Activated T-helper 1 cell treated with anti-CD3 and anti-CD28 coated beads, Interleukin-12 subunit alpha, Interleukin-12 subunit beta, Interleukin-2, Interleukin-4 antibody, amounts not matched to agents 30 ng/mL and 10 ng/mL and 1 ng/mL, durations not matched to agents 14 hours and 24 hours and 36 hours (primary cell): ENCODE measurements at regions of chr15 and their contacts with region 1.

Region 1: DNA sequence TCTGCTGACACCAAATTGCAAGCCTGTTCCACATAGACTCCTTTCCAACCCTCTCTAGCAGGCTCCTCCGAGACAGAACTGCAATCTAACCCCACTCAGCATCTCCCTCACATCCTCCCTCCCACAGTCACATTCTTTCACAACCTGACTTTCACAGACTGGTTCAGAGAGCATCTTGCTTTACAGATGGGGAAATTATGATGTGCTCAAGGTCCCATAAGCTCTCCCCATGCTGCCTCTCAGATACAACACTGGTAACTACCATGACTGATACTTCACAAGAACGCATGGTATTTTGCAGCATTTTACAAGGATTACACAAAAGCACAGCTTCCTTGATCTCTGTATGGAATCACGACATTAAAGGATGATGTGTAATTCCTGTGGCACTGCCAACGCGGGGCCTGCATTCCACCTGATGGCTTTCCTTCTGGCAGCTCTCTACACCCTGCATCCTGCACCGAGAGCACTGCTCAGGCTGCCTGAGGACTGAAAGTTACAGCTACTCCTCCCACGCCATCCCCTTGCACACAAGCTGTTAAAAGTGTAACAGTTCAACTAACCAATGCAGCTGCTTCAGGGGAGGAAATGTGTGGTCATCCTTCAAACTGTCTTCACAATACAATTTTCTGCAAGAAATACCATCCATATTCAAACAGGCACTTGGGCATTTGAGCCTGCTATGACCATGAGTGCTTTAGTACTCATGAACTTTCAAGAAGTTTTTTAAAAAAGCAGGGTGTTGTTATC is 27.6 kb downstream of the TBC1D2B start:
- DNase-seq: peak; percentile 62
- H3K4me3 Mint-ChIP-seq: peak overlapping the region; percentile 69
- H3K27ac Mint-ChIP-seq: peak overlapping the region; percentile 97
- H3K4me1 Mint-ChIP-seq: peaks cover 96% of the 10 kb centered on the region
- H3K27me3 Mint-ChIP-seq: no peaks in the 10 kb centered on the region

Region 2: GRCh38 chr15:78034495-78035191 is 15.2 kb before region 1 on chr15:
- intact Hi-C with region 1: loop called (anchors 1 kb)
- DNase-seq: peak; percentile 79
- H3K4me3 Mint-ChIP-seq: peak overlapping the region; percentile 17
- H3K27ac Mint-ChIP-seq: peak overlapping the region; percentile 84
- H3K4me1 Mint-ChIP-seq: peaks cover 84% of the 10 kb centered on the region
- H3K27me3 Mint-ChIP-seq: no peaks in the 10 kb centered on the region

Region 3: DNA sequence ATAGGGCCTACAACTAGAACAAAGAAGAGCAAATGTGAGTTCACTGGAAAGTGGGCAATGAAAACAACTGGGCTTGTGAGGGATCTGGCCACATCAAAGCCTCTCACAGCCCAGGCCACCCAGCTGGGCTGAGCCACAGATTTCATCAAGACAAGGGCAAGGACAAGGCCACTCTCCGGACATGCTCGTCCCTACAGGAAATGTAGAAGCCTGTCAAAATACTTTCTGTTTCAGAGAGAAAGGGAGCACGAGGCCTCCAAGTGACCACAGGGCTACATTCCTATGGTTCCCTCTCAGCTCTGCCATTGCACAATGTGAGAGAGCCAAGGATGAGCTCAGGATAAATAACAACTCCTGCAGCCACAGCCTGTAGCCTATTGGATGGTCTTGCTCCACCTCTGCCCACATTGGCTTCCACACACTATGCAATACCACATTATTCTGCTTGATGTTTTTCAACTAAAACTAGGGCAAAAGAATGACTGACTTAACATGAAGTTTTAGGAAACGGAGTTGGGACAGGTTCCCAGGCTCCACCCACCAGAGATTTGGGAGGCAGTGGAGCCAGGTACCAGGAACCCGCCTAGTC is 15.5 kb after region 1 on chr15:
- intact Hi-C with region 1: loop called (anchors 1 kb)
- DNase-seq: no peak
- H3K4me3 Mint-ChIP-seq: peak overlapping the region; percentile 9
- H3K27ac Mint-ChIP-seq: no peak overlapping the region
- H3K4me1 Mint-ChIP-seq: no peaks in the 10 kb centered on the region
- H3K27me3 Mint-ChIP-seq: no peaks in the 10 kb centered on the region

Region 4: GRCh38 chr15:78077058-78077877 is 27.4 kb after region 1 on chr15 and contains the start of gene TBC1D2B:
- intact Hi-C with region 1: loop called (anchors 1 kb)
- DNase-seq: peak; percentile 66
- H3K4me3 Mint-ChIP-seq: peak within 1 kb of the TSS; percentile 100
- H3K27ac Mint-ChIP-seq: peak within 1 kb of the TSS; percentile 95
- H3K4me1 Mint-ChIP-seq: peaks cover 43% of the 10 kb centered on the region
- H3K27me3 Mint-ChIP-seq: no peaks in the 10 kb centered on the region
- total RNA-seq, gene TBC1D2B: 60.8 and 64.7 TPM in 2 replicates